Caco-2 (cell line): ENCODE measurements at regions of chr9 and their contacts with region 1.

Region 1: DNA sequence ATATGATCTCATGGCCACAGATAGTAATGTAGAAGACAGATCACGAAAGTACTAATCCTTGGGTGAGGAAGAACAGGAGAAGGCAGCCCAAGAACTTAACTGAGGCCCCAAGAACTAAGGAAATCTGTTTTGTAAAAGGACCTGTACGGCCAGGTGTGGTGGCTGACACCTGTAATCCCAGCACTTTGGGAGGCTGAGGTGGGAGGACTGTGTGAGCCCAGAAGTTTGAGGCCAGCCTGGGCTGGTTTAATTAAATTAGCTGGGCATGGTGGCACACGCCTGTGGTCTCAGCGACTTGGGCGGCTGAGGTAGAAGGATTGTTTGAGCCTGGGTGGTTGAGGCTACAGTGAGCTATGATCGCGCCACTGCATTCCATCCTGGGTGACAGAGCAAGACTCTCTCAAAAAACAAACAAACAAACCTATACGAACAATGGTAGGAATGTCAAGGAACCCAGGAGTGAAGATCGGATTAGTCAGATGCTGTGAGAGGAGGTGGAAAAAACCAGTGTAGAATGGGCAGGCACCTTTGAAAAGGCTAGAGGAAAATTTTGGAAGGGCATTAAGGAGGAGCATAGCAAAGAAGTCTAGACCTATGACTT is 283.8 kb upstream of the DMRT1 start:
- DNase-seq: peak; percentile 54 to 62
- H3K4me3 ChIP-seq: no peak overlapping the region
- H3K4me3 Mint-ChIP-seq: peak overlapping the region; percentile 58
- H3K27ac Mint-ChIP-seq: peak overlapping the region; percentile 96
- H3K4me1 ChIP-seq: peaks cover 49% of the 10 kb centered on the region
- H3K4me1 Mint-ChIP-seq: peaks cover 43% of the 10 kb centered on the region
- H3K27me3 ChIP-seq: no peaks in the 10 kb centered on the region
- H3K27me3 Mint-ChIP-seq: no peaks in the 10 kb centered on the region
- CTCF ChIP-seq: no peak

Region 2: DNA sequence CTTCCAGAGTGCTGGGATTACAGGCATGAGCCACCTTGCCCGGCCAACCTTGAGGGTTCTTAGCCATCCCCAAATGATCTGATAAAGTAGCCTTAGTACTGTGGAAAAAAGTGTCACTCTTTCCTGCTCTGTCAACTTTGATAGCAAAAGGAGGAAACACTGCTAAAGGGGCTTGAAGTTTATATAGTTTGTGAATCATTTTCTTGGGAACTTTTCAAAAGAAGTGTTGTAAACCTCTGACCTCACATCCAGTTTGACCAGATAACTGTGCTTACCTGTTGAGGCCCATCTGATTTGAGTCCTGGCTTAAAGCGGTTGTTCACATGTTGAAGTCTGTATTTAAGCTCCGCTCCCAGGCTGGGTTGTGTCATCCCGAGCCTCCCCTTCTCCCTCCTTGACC is 39.7 kb before region 1 on chr9:
- CTCF ChIA-PET with region 1: no interaction called
- POLR2A ChIA-PET with region 1: no interaction called
- intact Hi-C with region 1: loop called (anchors 5 kb)
- DNase-seq: peak; percentile 57 to 58
- H3K4me3 ChIP-seq: no peak overlapping the region
- H3K4me3 Mint-ChIP-seq: peak overlapping the region; percentile 49
- H3K27ac Mint-ChIP-seq: peak overlapping the region; percentile 70
- H3K4me1 ChIP-seq: peaks cover 38% of the 10 kb centered on the region
- H3K4me1 Mint-ChIP-seq: peaks cover 24% of the 10 kb centered on the region
- H3K27me3 ChIP-seq: no peaks in the 10 kb centered on the region
- H3K27me3 Mint-ChIP-seq: no peaks in the 10 kb centered on the region
- CTCF ChIP-seq: no peak

Region 3: GRCh38 chr9:591292-591691 is 33.6 kb after region 1 on chr9:
- CTCF ChIA-PET with region 1: no interaction called
- POLR2A ChIA-PET with region 1: no interaction called
- intact Hi-C with region 1: no loop called
- DNase-seq: no peak
- H3K4me3 ChIP-seq: no peak overlapping the region
- H3K4me3 Mint-ChIP-seq: no peak overlapping the region
- H3K27ac Mint-ChIP-seq: peak overlapping the region; percentile 8
- H3K4me1 ChIP-seq: peaks cover 39% of the 10 kb centered on the region
- H3K4me1 Mint-ChIP-seq: peaks cover 23% of the 10 kb centered on the region
- H3K27me3 ChIP-seq: no peaks in the 10 kb centered on the region
- H3K27me3 Mint-ChIP-seq: no peaks in the 10 kb centered on the region
- CTCF ChIP-seq: no peak

Region 4: GRCh38 chr9:626596-626995 is 68.9 kb after region 1 on chr9:
- CTCF ChIA-PET with region 1: no interaction called
- POLR2A ChIA-PET with region 1: no interaction called
- intact Hi-C with region 1: no loop called
- DNase-seq: no peak
- H3K4me3 ChIP-seq: no peak overlapping the region
- H3K4me3 Mint-ChIP-seq: no peak overlapping the region
- H3K27ac Mint-ChIP-seq: no peak overlapping the region
- H3K4me1 ChIP-seq: no peaks in the 10 kb centered on the region
- H3K4me1 Mint-ChIP-seq: peaks cover 5% of the 10 kb centered on the region
- H3K27me3 ChIP-seq: no peaks in the 10 kb centered on the region
- H3K27me3 Mint-ChIP-seq: no peaks in the 10 kb centered on the region
- CTCF ChIP-seq: no peak